ENCODE measurements at regions of chr14 and their contacts with region 1.

Region 1: GRCh38 chr14:92793709-92794546 is at the start of gene GOLGA5:
- DNase-seq: peak; percentile 95
- CTCF ChIP-seq: no peak

Region 2: DNA sequence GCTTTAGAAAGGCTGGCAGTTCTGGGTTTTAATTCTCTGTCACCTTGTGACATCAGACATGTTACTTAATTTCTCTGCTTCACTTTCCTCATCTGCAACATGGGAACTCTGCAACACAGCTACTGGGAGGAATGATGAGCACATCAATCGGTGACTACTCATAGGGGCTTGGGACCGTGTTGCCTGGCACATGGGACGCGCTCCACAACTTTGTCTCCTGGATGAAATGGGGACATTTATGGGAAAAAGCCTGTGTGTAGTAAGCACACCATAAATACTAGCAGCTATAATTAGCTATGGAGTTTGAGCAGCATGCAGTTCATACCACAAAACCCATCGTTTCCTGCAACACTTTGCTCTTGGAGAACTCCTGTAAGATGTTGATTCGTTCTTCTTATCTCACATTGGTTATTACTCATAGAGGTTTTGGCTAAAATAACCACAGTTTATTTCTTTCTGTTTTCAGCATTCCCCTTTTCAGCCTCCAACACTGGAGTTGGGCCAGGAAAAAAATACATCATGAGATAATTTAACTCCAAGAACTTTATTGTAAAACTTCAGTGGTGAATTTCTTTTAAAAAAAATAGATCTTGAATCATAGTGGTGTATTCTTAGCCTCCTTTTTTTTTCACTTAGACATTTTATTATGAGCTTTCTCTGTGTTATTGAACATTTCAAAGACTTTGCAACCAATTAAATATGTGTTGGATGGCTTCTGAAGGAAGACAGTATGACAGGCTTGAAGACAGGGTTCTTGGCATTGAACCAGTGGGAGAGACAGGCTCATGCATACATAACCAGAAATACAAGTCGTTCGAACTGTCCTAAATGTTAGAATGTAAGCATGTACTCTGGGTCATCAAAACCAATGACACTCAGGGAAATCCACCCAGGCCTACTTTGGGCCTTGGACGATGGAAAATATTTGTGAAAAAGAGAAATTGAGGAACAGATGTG is 207.7 kb before region 1 on chr14:
- in situ Hi-C with region 1: loop called (anchors 25 kb)
- DNase-seq: no peak
- CTCF ChIP-seq: no peak